IMR-90 (cell line): ENCODE measurements at regions of chr3 and their contacts with region 1.

Region 1: DNA sequence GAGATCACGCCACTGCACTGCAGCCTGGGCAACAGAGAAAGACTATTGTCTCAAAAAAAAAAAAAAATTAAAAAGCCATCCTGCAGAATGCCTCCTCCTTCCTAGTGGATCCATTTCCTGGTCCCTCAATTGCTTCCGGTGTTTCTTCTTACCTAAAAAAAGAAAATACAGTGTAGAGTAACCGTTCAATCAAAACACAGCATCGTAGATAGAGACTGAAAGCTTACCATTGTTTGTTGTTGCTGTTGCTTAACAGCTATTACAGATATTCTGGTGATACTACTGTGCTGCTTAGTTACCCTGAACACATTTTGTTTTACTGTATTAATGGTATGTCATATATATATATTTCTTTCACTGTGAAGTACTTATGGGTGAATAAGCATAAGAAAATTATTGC is 105.5 kb upstream of the LRRFIP2 start:
- DNase-seq: no peak
- ATAC-seq: no peak
- H3K4me3 ChIP-seq: no peak overlapping the region
- H3K27ac ChIP-seq: no peak overlapping the region
- H3K4me1 ChIP-seq: peaks cover 3% of the 10 kb centered on the region; the same call in 1 of the 2 replicates
- H3K27me3 ChIP-seq: no peaks in the 10 kb centered on the region
- CTCF ChIP-seq: no peak
- POLR2A ChIP-seq: no peak
- RAD21 ChIP-seq: no peak

Region 2: DNA sequence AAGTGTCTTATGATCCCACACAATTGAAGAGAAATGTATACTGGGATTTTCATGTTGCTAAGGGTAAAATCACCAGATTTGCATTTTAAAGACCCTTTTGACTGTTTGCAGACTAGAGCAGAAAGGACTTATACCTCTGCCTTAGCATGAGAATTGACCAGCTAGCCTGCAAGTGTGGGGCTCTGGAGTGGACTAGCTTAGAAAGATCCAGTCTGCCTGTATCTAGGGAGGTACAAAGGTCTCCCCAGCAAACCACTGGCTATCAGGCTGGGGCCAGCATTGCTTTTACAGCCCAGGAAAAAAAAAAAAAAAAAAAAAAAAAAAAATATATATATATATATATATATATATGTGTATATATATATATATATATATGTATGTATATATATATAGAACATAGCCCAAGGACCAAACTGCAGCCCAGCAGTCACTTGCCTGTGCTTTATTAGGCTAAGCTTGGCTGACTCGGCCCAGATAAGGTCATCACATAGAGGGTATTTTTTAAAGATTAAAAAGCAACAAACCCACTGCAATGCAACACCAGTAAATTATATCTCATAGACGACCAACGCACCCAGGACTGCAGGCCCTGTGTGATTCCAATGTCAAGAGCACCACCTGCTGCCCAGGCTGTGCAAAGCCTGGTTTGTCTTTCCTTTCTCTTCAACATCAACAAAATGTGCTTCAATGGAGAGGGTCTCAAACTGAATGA is 579.2 kb before region 1 on chr3:
- CTCF ChIA-PET with region 1: no interaction called
- POLR2A ChIA-PET with region 1: no interaction called
- dilution Hi-C with region 1: no loop called
- in situ Hi-C with region 1: no loop called
- intact Hi-C with region 1: no loop called
- DNase-seq: peak; percentile 85
- ATAC-seq: peak; percentile 93
- H3K4me3 ChIP-seq: no peak overlapping the region
- H3K27ac ChIP-seq: no peak overlapping the region
- H3K4me1 ChIP-seq: no peaks in the 10 kb centered on the region; the same call in 1 of the 2 replicates
- H3K27me3 ChIP-seq: no peaks in the 10 kb centered on the region
- CTCF ChIP-seq: peak; percentile 97
- POLR2A ChIP-seq: no peak
- RAD21 ChIP-seq: peak; percentile 100

Region 3: DNA sequence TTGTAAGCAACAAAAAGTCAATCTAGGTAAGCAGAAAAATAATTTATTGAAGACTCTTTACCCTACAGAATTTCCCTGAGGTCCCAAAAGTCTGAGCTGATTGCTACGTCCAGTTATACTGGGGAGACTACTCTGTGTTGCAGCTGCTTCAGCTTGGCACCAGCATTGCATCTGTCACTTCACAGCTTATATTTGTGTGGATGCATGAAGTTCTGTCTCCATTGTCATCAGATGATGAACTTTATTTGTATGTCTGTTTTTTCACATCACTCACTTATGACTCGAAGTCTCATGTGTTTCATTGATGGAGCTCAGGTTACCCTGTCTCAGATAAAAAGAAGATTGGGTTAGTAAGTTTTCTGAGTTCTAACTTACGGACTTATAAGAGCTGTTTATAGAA is 30.1 kb before region 1 on chr3:
- CTCF ChIA-PET with region 1: no interaction called
- POLR2A ChIA-PET with region 1: interaction called, 7 read pairs
- dilution Hi-C with region 1: no loop called
- in situ Hi-C with region 1: no loop called
- intact Hi-C with region 1: loop called (anchors 5 kb)
- DNase-seq: peak; percentile 13
- ATAC-seq: no peak
- H3K4me3 ChIP-seq: no peak overlapping the region
- H3K27ac ChIP-seq: no peak overlapping the region
- H3K4me1 ChIP-seq: peaks cover 17% of the 10 kb centered on the region
- H3K27me3 ChIP-seq: no peaks in the 10 kb centered on the region
- CTCF ChIP-seq: no peak
- POLR2A ChIP-seq: no peak
- RAD21 ChIP-seq: no peak